Endothelial cell of umbilical vein (primary cell): ENCODE measurements at regions of chr14 and their contacts with region 1.

Region 1: GRCh38 chr14:54108481-54109471 is 152.2 kb upstream of the BMP4 start:
- DNase-seq: peak; percentile 94
- H3K4me3 ChIP-seq: peak overlapping the region in 1 of 3 experiments; percentile 17
- H3K27ac ChIP-seq: peak overlapping the region; percentile 96
- H3K4me1 ChIP-seq: peaks cover 44% of the 10 kb centered on the region
- H3K27me3 ChIP-seq: no peaks in the 10 kb centered on the region
- CTCF ChIP-seq: no peak
- POLR2A ChIP-seq: no peak

Region 2: GRCh38 chr14:53152890-53153701 is 955.7 kb before region 1 on chr14 and contains the start of gene DDHD1:
- CTCF ChIA-PET with region 1: no interaction called
- POLR2A ChIA-PET with region 1: no interaction called
- dilution Hi-C with region 1: no loop called
- intact Hi-C with region 1: loop called (anchors 10 kb)
- DNase-seq: peak; percentile 67
- H3K4me3 ChIP-seq: peak within 1 kb of the TSS; percentile 59 to 73 (median 61)
- H3K27ac ChIP-seq: peak within 1 kb of the TSS; percentile 61
- H3K4me1 ChIP-seq: peaks cover 8% of the 10 kb centered on the region
- H3K27me3 ChIP-seq: no peaks in the 10 kb centered on the region
- CTCF ChIP-seq: no peak
- POLR2A ChIP-seq: peak; percentile 66
- total RNA-seq, gene DDHD1: 12.4 and 13.9 TPM in 2 replicates

Region 3: DNA sequence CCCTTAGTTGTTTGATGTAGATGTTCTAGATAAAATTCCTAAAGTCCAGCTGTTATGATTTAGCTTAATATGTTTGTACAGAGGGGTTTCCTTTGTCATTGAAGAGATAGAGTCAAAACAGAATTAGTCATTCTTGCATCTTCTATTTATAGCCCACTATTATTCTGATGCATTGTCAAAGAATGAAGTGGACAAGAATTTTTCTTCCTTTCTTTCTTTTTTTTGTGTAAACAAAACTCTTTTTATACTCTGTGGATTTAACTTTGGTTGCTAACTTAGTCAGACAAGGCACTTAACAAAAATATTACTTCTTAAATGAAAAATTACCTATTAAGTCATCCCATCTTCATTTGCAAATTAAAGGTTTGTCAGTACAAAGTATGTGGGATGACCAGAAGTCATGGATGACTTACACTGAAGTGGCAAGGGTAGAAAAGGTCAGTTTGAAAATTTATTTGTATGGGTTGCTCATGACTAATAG is 740.0 kb before region 1 on chr14:
- CTCF ChIA-PET with region 1: no interaction called
- POLR2A ChIA-PET with region 1: no interaction called
- dilution Hi-C with region 1: no loop called
- intact Hi-C with region 1: loop called (anchors 5 kb)
- DNase-seq: peak; percentile 77
- H3K4me3 ChIP-seq: no peak overlapping the region
- H3K27ac ChIP-seq: peak overlapping the region; percentile 72
- H3K4me1 ChIP-seq: peaks cover 45% of the 10 kb centered on the region
- H3K27me3 ChIP-seq: no peaks in the 10 kb centered on the region
- CTCF ChIP-seq: no peak
- POLR2A ChIP-seq: no peak

Region 4: GRCh38 chr14:54001189-54001913 is 107.4 kb before region 1 on chr14:
- CTCF ChIA-PET with region 1: no interaction called
- POLR2A ChIA-PET with region 1: no interaction called
- dilution Hi-C with region 1: no loop called
- intact Hi-C with region 1: loop called (anchors 2 kb)
- DNase-seq: peak; percentile 34
- H3K4me3 ChIP-seq: no peak overlapping the region
- H3K27ac ChIP-seq: peak overlapping the region; percentile 69
- H3K4me1 ChIP-seq: peaks cover 20% of the 10 kb centered on the region
- H3K27me3 ChIP-seq: no peaks in the 10 kb centered on the region
- CTCF ChIP-seq: peak in 1 of 2 donors; percentile 10
- POLR2A ChIP-seq: no peak

Region 5: DNA sequence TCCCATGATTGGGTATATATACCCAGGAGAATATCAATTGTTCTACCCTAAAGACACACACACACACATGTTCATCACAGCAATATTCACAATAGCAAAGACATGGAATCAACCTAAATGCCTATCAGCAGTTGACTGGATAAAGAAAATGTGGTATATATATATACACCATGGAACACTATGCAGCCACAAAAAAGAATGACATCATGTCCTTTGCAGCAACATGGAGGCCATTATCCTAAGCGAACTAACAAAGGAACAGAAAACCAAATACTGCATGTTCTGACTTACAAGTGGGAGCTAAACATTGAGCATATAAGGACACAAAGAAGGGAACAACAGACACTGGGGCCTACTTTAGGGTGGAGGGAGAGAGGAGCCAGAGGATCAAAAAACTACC is 88.0 kb before region 1 on chr14:
- CTCF ChIA-PET with region 1: no interaction called
- POLR2A ChIA-PET with region 1: no interaction called
- dilution Hi-C with region 1: no loop called
- intact Hi-C with region 1: no loop called
- DNase-seq: no peak
- H3K4me3 ChIP-seq: no peak overlapping the region
- H3K27ac ChIP-seq: no peak overlapping the region
- H3K4me1 ChIP-seq: no peaks in the 10 kb centered on the region
- H3K27me3 ChIP-seq: no peaks in the 10 kb centered on the region
- CTCF ChIP-seq: no peak
- POLR2A ChIP-seq: no peak

Region 6: DNA sequence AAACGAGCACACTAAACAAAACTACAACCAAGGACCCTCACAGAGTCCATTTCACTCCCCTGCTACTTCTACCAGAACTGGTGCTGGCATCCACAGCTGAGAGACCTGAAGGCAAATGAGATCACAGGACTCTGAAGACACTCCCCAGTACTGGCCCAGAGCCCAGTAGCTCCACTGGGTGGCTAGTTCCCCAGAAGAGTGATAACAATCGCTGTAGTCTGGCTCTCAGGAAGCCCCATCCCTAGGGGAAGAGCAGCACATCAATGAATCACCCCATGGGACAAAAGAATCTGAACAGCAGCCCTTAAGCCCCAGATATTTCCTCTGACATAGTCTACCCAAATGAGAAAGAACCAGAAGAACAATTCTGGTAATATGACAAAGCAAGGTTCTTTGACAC is 38.5 kb after region 1 on chr14:
- CTCF ChIA-PET with region 1: no interaction called
- POLR2A ChIA-PET with region 1: no interaction called
- dilution Hi-C with region 1: no loop called
- intact Hi-C with region 1: loop called (anchors 1 kb)
- DNase-seq: peak; percentile 77
- H3K4me3 ChIP-seq: no peak overlapping the region
- H3K27ac ChIP-seq: peak overlapping the region; percentile 66
- H3K4me1 ChIP-seq: peaks cover 17% of the 10 kb centered on the region
- H3K27me3 ChIP-seq: no peaks in the 10 kb centered on the region
- CTCF ChIP-seq: no peak
- POLR2A ChIP-seq: no peak

Region 7: DNA sequence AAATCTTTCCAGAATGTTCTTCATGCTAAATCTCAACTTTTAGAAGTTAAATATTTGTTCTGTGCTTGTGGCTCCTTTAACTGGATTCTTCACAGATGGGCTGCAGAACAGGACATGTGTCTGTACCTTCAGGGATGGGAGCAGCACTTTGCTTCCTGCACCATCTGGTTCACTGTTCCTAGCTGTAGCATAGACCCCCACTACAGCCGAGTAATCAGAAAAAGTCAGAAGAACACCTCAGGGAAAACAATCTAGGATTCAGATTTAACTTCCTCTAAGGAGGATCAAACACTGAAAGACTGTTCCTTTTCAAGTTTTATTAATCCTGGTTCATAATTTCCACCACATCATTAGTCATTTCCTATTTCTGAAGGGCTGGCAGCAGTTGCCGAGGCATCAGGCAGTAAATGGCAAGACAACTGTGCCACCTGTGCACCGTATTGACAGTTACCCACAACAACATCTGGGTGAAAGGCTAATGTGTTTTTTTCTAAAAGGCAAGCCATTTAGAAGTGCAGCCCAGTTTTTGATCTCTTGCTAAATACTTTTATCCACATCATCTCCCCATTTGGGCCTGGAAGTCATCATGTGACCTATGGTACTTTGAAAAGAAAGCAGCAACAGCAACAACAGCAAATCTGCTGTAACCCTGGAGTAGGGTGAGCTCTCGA is 60.6 kb after region 1 on chr14:
- CTCF ChIA-PET with region 1: interaction called, 12 read pairs
- POLR2A ChIA-PET with region 1: no interaction called
- dilution Hi-C with region 1: no loop called
- intact Hi-C with region 1: loop called (anchors 1 kb)
- DNase-seq: peak; percentile 90
- H3K4me3 ChIP-seq: no peak overlapping the region
- H3K27ac ChIP-seq: peak overlapping the region; percentile 59
- H3K4me1 ChIP-seq: peaks cover 54% of the 10 kb centered on the region
- H3K27me3 ChIP-seq: no peaks in the 10 kb centered on the region
- CTCF ChIP-seq: no peak
- POLR2A ChIP-seq: no peak

Region 8: GRCh38 chr14:54211551-54212308 is 103.0 kb after region 1 on chr14:
- CTCF ChIA-PET with region 1: no interaction called
- POLR2A ChIA-PET with region 1: no interaction called
- dilution Hi-C with region 1: no loop called
- intact Hi-C with region 1: loop called (anchors 2 kb)
- DNase-seq: peak; percentile 86
- H3K4me3 ChIP-seq: no peak overlapping the region
- H3K27ac ChIP-seq: peak overlapping the region; percentile 91
- H3K4me1 ChIP-seq: peaks cover 25% of the 10 kb centered on the region
- H3K27me3 ChIP-seq: no peaks in the 10 kb centered on the region
- CTCF ChIP-seq: no peak
- POLR2A ChIP-seq: no peak

Region 9: GRCh38 chr14:54282849-54283248 is 174.1 kb after region 1 on chr14:
- CTCF ChIA-PET with region 1: no interaction called
- POLR2A ChIA-PET with region 1: no interaction called
- dilution Hi-C with region 1: no loop called
- intact Hi-C with region 1: no loop called
- DNase-seq: no peak
- H3K4me3 ChIP-seq: no peak overlapping the region
- H3K27ac ChIP-seq: no peak overlapping the region
- H3K4me1 ChIP-seq: no peaks in the 10 kb centered on the region
- H3K27me3 ChIP-seq: no peaks in the 10 kb centered on the region
- CTCF ChIP-seq: no peak
- POLR2A ChIP-seq: no peak